Calu3 (cell line): ENCODE measurements at regions of chr1 and their contacts with region 1.

Region 1: DNA sequence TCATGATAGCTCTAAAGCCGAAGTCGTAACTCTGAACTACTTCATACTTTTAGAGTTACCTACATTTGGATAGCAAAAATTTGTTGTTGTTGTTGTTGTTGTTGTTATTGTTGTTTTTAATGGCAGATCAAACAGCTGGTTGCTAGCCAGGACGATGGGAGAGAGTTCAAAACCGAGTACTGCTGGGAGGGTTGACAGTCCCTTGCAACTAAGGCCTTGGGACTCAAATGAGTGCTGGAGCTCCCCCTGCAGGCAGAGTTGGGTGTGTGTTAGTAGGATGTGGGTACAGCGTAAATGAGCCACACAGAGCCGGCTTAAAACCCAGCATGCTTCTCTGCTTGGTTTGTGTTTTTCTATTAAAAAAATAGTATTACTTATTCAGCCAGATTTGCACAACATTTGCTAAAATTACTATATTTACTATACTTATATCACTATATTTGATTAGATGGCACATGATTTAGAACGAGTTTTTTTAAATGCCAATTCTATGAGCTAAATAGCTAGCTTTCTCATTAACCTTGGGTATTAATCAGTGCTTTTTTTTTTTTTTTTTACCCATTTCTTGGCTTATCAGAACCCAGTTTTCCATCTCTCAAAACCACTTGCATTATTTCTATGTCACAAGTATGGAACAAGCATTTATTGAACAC is 129.2 kb upstream of the SYT6 start:
- DNase-seq: peak; percentile 76
- H3K4me3 Mint-ChIP-seq: no peak overlapping the region
- H3K27ac Mint-ChIP-seq: no peak overlapping the region
- H3K4me1 Mint-ChIP-seq: no peaks in the 10 kb centered on the region
- H3K27me3 Mint-ChIP-seq: peaks cover 13% of the 10 kb centered on the region
- CTCF ChIP-seq: peak; percentile 68

Region 2: GRCh38 chr1:113978863-113979702 is 303.8 kb before region 1 on chr1 and contains the start of gene OLFML3:
- CTCF ChIA-PET with region 1: interaction called, 24 read pairs
- intact Hi-C with region 1: loop called (anchors 2 kb)
- DNase-seq: peak; percentile 70
- H3K4me3 Mint-ChIP-seq: peak within 1 kb of the TSS; percentile 13
- H3K27ac Mint-ChIP-seq: no peak within 1 kb of the TSS
- H3K4me1 Mint-ChIP-seq: peaks cover 8% of the 10 kb centered on the region
- H3K27me3 Mint-ChIP-seq: peaks cover 34% of the 10 kb centered on the region
- CTCF ChIP-seq: peak; percentile 38
- total RNA-seq, gene OLFML3: 0.24 TPM in 1 of 2 replicates, not detected in the other

Region 3: DNA sequence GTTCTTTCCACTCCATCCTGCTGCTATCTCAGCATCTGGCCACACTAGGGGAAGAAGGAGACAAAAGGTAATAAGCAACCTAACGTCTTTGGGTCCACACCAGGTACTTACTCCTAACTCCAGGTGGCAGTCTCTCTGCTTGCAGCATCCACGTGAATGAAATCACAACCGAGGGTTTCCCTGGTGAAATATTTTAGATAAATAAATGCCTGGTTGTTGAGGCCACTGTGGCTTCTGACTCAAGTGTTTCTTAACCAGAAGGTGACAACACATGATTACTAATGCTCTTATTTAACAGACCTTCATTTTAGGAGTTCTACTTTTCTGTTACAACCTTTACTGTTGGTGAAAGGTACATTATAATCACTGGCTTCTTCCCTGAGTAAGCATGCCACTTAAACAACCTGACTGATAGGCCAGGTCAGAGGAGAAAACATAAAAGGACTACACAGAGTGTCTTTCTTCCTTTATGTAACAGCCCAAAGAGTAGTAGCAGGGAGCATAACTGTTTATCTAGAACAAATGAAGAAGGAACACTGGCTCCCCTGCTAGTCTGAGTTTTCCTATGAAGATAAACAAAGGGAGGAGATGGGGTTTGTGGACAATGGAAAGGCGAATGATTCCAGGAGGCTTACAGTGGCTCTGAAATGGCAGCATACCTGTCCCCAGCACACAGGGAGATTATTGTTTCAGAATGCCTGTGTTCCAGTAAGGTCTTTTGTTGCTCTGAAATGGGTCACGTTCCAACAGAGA is 189.1 kb before region 1 on chr1:
- CTCF ChIA-PET with region 1: no interaction called
- intact Hi-C with region 1: loop called (anchors 5 kb)
- DNase-seq: no peak
- H3K4me3 Mint-ChIP-seq: no peak overlapping the region
- H3K27ac Mint-ChIP-seq: no peak overlapping the region
- H3K4me1 Mint-ChIP-seq: no peaks in the 10 kb centered on the region
- H3K27me3 Mint-ChIP-seq: peaks cover 83% of the 10 kb centered on the region
- CTCF ChIP-seq: no peak

Region 4: DNA sequence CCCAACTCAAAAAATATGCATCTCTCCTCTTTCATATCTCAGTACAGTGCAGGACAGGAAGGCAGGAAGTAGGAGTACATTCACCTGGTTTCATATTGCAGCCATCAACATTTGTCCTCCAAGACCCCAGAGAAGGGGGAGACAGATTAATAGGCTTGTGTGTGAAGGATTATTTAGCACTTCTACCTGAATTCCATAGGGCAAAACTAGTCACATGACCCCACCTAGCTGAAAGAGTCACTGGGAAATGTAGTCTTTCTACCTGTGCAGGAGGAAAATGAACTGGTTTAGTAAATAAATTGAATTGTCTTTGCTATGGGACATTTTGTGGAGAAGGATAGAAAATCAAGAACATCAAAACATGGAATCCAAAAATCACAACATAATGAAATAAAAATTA is 242.1 kb after region 1 on chr1:
- CTCF ChIA-PET with region 1: no interaction called
- intact Hi-C with region 1: no loop called
- DNase-seq: no peak
- H3K4me3 Mint-ChIP-seq: no peak overlapping the region
- H3K27ac Mint-ChIP-seq: no peak overlapping the region
- H3K4me1 Mint-ChIP-seq: peaks cover 2% of the 10 kb centered on the region
- H3K27me3 Mint-ChIP-seq: no peaks in the 10 kb centered on the region
- CTCF ChIP-seq: no peak